ENCODE measurements at regions of chr9 and their contacts with region 1.

Region 1: DNA sequence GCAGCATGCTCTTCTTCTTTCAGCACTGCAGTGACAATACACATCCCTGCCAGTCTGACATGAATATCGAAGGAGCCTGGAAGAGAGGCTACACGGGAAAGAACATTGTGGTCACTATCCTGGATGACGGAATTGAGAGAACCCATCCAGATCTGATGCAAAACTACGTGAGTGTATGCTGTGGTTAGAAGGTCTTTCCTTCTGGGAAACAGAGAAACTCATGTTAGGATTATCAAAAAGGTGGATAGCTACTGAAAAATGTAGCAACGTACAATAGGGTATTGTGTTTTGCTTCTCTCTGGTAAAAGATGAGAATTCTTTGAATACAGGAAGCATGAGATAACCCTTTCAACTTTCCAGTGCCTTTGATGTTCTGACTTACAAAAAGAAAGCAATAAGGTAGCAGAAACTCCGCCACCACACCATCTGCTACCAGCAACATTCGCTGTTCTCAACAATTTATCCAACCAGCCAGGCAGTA is 133.3 kb downstream of the PCSK5 start:
- DNase-seq: peak in 7 of 9 donors; percentile 69 to 87 (median 81)
- ATAC-seq: peak; percentile 93
- H3K4me3 ChIP-seq: peak overlapping the region; percentile 38
- H3K4me3 Mint-ChIP-seq: peak overlapping the region; percentile 68 to 86 (median 80)
- H3K27ac ChIP-seq: peak overlapping the region; percentile 76
- H3K27ac Mint-ChIP-seq: peak overlapping the region; percentile 77 to 99 (median 96)
- H3K4me1 ChIP-seq: peaks cover 10 to 96% of the 10 kb centered on the region in 2 donors
- H3K4me1 Mint-ChIP-seq: peaks cover 59 to 100% (median 98%) of the 10 kb centered on the region in 7 donors
- H3K27me3 ChIP-seq: no peaks in the 10 kb centered on the region
- H3K27me3 Mint-ChIP-seq: no peaks in the 10 kb centered on the region

Region 2: DNA sequence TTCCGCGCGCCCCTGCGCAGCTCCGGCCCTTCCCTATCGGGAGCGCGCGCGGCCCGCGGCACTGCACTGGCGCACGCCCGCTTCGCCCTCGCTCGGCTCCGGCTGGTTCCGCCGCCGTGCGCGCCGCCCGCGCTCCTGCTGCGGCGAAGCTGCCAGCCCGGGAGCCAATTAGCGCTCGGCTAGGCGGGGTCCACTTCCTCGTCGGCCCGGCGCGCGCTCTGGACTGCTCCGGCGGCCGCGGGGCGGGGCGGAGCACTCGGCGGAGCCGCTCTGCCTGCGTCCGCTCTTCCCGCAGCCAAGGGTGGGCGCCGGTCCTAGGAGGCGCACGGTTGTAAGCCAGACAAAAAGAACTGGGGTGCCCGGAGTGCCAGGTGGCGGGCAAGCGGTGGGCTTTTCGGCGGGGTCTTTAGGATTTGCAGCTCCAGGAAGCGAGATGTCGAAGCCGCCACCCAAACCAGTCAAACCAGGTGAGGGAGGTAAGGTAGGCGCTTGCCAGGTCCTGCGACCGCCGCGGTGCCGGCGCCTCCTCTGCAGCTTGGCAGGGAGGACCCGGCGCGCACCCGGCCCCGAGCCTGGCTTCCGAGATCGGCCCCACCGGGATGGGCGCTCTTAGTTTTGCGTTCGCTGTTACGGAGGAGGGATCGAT is 935.4 kb before region 1 on chr9 and contains the start of gene OSTF1:
- CTCF ChIA-PET with region 1: no interaction called
- POLR2A ChIA-PET with region 1: no interaction called
- intact Hi-C with region 1: loop called (anchors 2 to 5 kb)
- DNase-seq: peak; percentile 89 to 95 (median 95)
- ATAC-seq: peak; percentile 93
- H3K4me3 ChIP-seq: peak within 1 kb of the TSS; percentile 76
- H3K4me3 Mint-ChIP-seq: peak within 1 kb of the TSS; percentile 89 to 100 (median 99)
- H3K27ac ChIP-seq: peak within 1 kb of the TSS; percentile 92
- H3K27ac Mint-ChIP-seq: peak within 1 kb of the TSS; percentile 91 to 98 (median 94)
- H3K4me1 ChIP-seq: peaks cover 29 to 49% of the 10 kb centered on the region in 2 donors
- H3K4me1 Mint-ChIP-seq: peaks cover 58 to 82% (median 78%) of the 10 kb centered on the region in 7 donors
- H3K27me3 ChIP-seq: no peaks in the 10 kb centered on the region
- H3K27me3 Mint-ChIP-seq: no peaks in the 10 kb centered on the region
- total RNA-seq, gene OSTF1: 38.7 to 93.5 (median 46.2) TPM

Region 3: GRCh38 chr9:75265525-75265972 is 758.2 kb before region 1 on chr9:
- CTCF ChIA-PET with region 1: no interaction called
- POLR2A ChIA-PET with region 1: no interaction called
- intact Hi-C with region 1: loop called in 1 of 2 experiments (anchors 10 kb)
- DNase-seq: peak in 8 of 9 donors; percentile 13 to 65 (median 42)
- ATAC-seq: peak; percentile 70
- H3K4me3 ChIP-seq: no peak overlapping the region
- H3K4me3 Mint-ChIP-seq: peak overlapping the region in 1 of 10 donors; percentile 14
- H3K27ac ChIP-seq: no peak overlapping the region
- H3K27ac Mint-ChIP-seq: no peak overlapping the region
- H3K4me1 ChIP-seq: no peaks in the 10 kb centered on the region
- H3K4me1 Mint-ChIP-seq: no peaks in the 10 kb centered on the region
- H3K27me3 ChIP-seq: no peaks in the 10 kb centered on the region
- H3K27me3 Mint-ChIP-seq: no peaks in the 10 kb centered on the region

Region 4: DNA sequence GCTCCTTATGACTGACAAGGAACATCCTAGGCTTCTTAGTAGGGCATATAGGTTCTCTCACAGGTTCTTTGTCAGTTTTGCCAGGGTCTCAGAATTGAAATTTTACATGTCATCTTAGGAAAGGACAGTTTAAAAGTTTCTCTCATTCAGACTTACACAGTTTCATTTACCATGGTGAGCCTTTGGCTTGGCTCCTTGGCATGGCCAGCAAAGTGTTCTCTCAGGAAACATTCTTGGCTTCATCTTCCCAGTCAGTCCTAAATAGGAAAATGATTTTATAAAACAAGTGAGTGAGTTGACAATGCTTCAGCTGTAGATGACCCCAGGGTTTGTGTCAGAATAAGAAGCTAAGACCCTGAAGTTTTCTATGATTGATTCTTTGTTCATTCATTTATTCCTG is 58.3 kb after region 1 on chr9:
- CTCF ChIA-PET with region 1: no interaction called
- POLR2A ChIA-PET with region 1: no interaction called
- intact Hi-C with region 1: loop called in 1 of 2 experiments (anchors 5 kb)
- DNase-seq: no peak
- ATAC-seq: no peak
- H3K4me3 ChIP-seq: no peak overlapping the region
- H3K4me3 Mint-ChIP-seq: no peak overlapping the region
- H3K27ac ChIP-seq: no peak overlapping the region
- H3K27ac Mint-ChIP-seq: no peak overlapping the region
- H3K4me1 ChIP-seq: no peaks in the 10 kb centered on the region
- H3K4me1 Mint-ChIP-seq: peaks cover 0 to 15% (median 4%) of the 10 kb centered on the region in 7 donors
- H3K27me3 ChIP-seq: no peaks in the 10 kb centered on the region
- H3K27me3 Mint-ChIP-seq: no peaks in the 10 kb centered on the region

Region 5: DNA sequence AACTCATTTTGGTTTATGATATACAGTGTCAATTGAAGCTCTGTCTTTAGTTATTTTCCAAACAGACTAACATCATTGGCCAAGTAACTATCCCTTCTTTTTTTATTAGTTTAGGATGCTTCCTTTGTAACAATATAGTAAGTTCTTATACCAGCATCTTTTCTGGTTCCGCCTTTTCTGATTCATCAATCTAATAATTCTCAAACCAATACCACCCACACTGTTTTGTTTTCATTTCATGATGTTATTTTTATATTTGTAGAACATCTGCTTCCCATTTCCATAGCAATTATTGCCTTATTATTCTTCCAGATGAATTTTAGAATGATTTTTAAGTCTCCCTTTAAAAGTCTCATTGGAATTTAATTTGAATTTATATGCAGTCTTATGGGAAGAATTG is 152.4 kb after region 1 on chr9:
- CTCF ChIA-PET with region 1: no interaction called
- POLR2A ChIA-PET with region 1: no interaction called
- intact Hi-C with region 1: loop called in 1 of 2 experiments (anchors 1 kb)
- DNase-seq: no peak
- ATAC-seq: no peak
- H3K4me3 ChIP-seq: no peak overlapping the region
- H3K4me3 Mint-ChIP-seq: no peak overlapping the region
- H3K27ac ChIP-seq: no peak overlapping the region
- H3K27ac Mint-ChIP-seq: peak overlapping the region in 1 of 9 donors; percentile 28
- H3K4me1 ChIP-seq: no peaks in the 10 kb centered on the region
- H3K4me1 Mint-ChIP-seq: peaks cover 0 to 10% (median 4%) of the 10 kb centered on the region in 7 donors
- H3K27me3 ChIP-seq: no peaks in the 10 kb centered on the region
- H3K27me3 Mint-ChIP-seq: no peaks in the 10 kb centered on the region

Region 6: GRCh38 chr9:76292246-76292645 is 268.5 kb after region 1 on chr9:
- CTCF ChIA-PET with region 1: no interaction called
- POLR2A ChIA-PET with region 1: no interaction called
- intact Hi-C with region 1: no loop called
- DNase-seq: no peak
- ATAC-seq: no peak
- H3K4me3 ChIP-seq: no peak overlapping the region
- H3K4me3 Mint-ChIP-seq: no peak overlapping the region
- H3K27ac ChIP-seq: no peak overlapping the region
- H3K27ac Mint-ChIP-seq: peak overlapping the region in 1 of 9 donors; percentile 34
- H3K4me1 ChIP-seq: no peaks in the 10 kb centered on the region
- H3K4me1 Mint-ChIP-seq: peaks cover 0 to 4% (median 0%) of the 10 kb centered on the region in 7 donors
- H3K27me3 ChIP-seq: no peaks in the 10 kb centered on the region
- H3K27me3 Mint-ChIP-seq: no peaks in the 10 kb centered on the region

Measured in naive thymus-derived CD4-positive, alpha-beta T cell (primary cell).